Activated CD8-positive, alpha-beta T cell treated with anti-CD3 and anti-CD28 coated beads, Interleukin-2, amount 10 ng/mL, durations not matched to agents 7 days and 5 days (primary cell): ENCODE measurements at regions of chr12 and their contacts with region 1.

Region 1: DNA sequence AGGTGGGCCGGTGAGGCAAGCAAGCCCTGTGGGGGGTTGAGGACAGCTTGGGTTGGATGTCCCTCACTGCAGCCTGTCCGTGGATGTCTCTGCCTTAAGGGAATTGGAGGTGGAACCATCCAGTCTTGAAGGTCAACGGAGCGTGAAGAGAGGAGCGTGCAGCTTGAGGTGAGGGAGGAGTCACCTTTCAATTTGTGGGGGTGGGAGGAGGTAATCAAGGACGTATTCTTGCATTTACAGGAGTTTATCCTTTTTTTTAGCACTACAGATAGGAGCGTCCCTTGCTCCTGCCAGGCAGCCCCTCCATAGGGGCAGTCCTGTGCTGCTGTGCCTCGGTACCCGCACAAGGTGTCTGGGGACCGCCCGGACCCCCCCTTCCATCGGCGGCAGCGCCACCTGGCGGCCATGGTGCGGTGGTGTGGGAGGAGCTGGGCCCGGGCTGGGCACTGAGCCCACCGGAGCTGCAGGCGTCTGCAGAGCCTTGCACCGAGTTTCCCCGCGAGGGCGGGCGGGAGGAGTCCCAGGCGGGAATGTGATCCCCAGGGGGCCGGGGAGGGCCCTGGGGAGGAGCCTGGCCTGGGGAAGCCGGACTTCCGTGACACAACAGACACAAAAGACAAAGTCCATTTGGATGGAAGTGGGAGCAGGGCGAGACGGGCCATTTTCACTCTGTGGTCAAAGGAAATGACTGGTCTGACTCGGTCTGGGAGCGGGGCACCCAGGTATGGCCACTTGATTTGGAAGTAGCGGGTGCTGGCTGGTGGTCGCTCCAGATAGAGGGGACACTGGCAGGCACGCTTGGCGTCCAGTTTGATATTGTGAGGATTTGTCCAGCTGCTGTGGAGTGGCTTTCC is 923 bp downstream of the DNAJC22 start:
- DNase-seq: peak; percentile 81
- ATAC-seq: peak; percentile 87
- H3K4me3 Mint-ChIP-seq: peak overlapping the region; percentile 60
- H3K27ac Mint-ChIP-seq: no peak overlapping the region
- H3K4me1 Mint-ChIP-seq: peaks cover 36% of the 10 kb centered on the region
- H3K27me3 Mint-ChIP-seq: peaks cover 71% of the 10 kb centered on the region

Region 2: GRCh38 chr12:48838048-48838447 is 509.6 kb before region 1 on chr12:
- CTCF ChIA-PET with region 1: no interaction called
- POLR2A ChIA-PET with region 1: no interaction called
- DNase-seq: no peak
- ATAC-seq: no peak
- H3K4me3 Mint-ChIP-seq: no peak overlapping the region
- H3K27ac Mint-ChIP-seq: no peak overlapping the region
- H3K4me1 Mint-ChIP-seq: no peaks in the 10 kb centered on the region
- H3K27me3 Mint-ChIP-seq: no peaks in the 10 kb centered on the region

Region 3: GRCh38 chr12:49296034-49296835 is 51.4 kb before region 1 on chr12:
- CTCF ChIA-PET with region 1: interaction called, 111 read pairs
- POLR2A ChIA-PET with region 1: interaction called, 3 read pairs
- DNase-seq: peak; percentile 76
- ATAC-seq: peak; percentile 73
- H3K4me3 Mint-ChIP-seq: peak overlapping the region; percentile 63
- H3K27ac Mint-ChIP-seq: no peak overlapping the region
- H3K4me1 Mint-ChIP-seq: peaks cover 22% of the 10 kb centered on the region
- H3K27me3 Mint-ChIP-seq: peaks cover 51% of the 10 kb centered on the region

Region 4: GRCh38 chr12:49309391-49309790 is 38.2 kb before region 1 on chr12:
- CTCF ChIA-PET with region 1: interaction called, 13 read pairs
- POLR2A ChIA-PET with region 1: no interaction called
- DNase-seq: no peak
- ATAC-seq: no peak
- H3K4me3 Mint-ChIP-seq: no peak overlapping the region
- H3K27ac Mint-ChIP-seq: no peak overlapping the region
- H3K4me1 Mint-ChIP-seq: no peaks in the 10 kb centered on the region
- H3K27me3 Mint-ChIP-seq: peaks cover 44% of the 10 kb centered on the region

Region 5: GRCh38 chr12:49331380-49332222 is 16.0 kb before region 1 on chr12:
- CTCF ChIA-PET with region 1: interaction called, 43 read pairs
- POLR2A ChIA-PET with region 1: no interaction called
- DNase-seq: no peak
- ATAC-seq: no peak
- H3K4me3 Mint-ChIP-seq: no peak overlapping the region
- H3K27ac Mint-ChIP-seq: no peak overlapping the region
- H3K4me1 Mint-ChIP-seq: peaks cover 4% of the 10 kb centered on the region
- H3K27me3 Mint-ChIP-seq: peaks cover 27% of the 10 kb centered on the region

Region 6: DNA sequence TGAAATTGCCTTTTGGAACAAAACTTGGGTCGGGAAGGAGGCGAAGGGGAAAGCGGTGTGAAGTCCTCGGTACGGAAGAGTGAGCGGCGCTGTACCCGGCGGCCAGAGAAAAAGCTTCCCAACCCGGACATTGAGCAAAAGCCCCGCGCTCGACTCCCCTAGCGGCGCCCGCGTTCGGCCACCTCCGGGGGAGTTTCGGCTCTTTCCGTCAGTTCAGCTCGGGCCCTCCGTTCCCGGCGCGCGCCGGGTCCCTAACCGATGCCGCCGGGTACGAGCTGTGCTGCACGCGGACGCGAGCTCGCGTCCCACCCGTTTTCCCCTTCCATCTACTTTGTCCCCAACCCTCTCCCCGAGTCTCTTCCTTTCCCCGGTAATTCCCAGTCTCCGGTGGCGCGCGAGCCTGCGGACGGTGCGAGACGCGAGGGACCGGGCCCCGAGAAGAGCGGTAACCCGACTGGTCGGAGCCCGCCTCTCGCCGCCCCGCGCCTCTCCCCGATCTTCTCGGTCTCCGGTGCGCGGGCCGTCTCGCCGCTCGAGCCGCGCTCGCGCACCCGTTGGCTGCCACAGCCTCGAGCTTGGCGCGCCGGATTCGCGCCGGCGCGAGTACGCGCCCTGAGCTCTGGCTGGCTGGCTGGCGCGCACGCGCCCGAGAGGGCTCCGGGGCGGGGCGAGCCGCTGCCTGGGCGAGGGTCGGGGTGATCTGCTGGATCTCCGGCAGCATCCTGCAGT is 19.2 kb after region 1 on chr12:
- CTCF ChIA-PET with region 1: interaction called, 45 read pairs
- POLR2A ChIA-PET with region 1: interaction called, 12 read pairs
- DNase-seq: peak; percentile 90
- ATAC-seq: peak; percentile 89
- H3K4me3 Mint-ChIP-seq: peak overlapping the region; percentile 97
- H3K27ac Mint-ChIP-seq: peak overlapping the region; percentile 98
- H3K4me1 Mint-ChIP-seq: peaks cover 38% of the 10 kb centered on the region
- H3K27me3 Mint-ChIP-seq: no peaks in the 10 kb centered on the region